ENCODE measurements at regions of chr1 and their contacts with region 1.

Region 1: GRCh38 chr1:109969907-109970306 is 14.7 kb upstream of the AHCYL1 start:
- DNase-seq: no peak
- ATAC-seq: peak; percentile 81
- H3K4me3 ChIP-seq: no peak overlapping the region
- H3K27ac ChIP-seq: peak overlapping the region; percentile 14
- H3K4me1 ChIP-seq: peaks cover 18% of the 10 kb centered on the region
- H3K27me3 ChIP-seq: no peaks in the 10 kb centered on the region
- CTCF ChIP-seq: no peak

Region 2: DNA sequence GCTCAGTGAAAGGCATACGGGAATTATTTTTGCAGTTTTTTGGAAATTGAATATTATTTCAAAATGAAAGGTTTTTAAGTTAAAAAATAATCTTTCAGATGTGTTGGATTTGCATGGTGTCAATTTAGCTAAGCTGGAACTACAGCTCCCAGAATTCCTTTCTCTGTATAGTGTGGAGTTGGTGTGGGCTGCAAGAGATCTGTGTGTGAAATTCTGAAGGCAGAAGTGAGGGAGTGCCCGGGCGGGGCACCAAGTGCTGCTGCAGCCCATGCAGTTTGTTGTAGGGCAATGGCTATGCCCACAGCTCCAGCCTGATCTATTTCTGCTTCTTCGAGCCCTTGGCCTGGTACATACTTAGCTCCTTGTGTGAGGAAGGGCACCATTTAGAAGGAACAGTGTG is 119.7 kb before region 1 on chr1:
- CTCF ChIA-PET with region 1: no interaction called
- POLR2A ChIA-PET with region 1: no interaction called
- intact Hi-C with region 1: no loop called
- DNase-seq: peak; percentile 21
- ATAC-seq: peak; percentile 65
- H3K4me3 ChIP-seq: no peak overlapping the region
- H3K27ac ChIP-seq: peak overlapping the region; percentile 33
- H3K4me1 ChIP-seq: peaks cover 21% of the 10 kb centered on the region
- H3K27me3 ChIP-seq: no peaks in the 10 kb centered on the region
- CTCF ChIP-seq: no peak

Region 3: DNA sequence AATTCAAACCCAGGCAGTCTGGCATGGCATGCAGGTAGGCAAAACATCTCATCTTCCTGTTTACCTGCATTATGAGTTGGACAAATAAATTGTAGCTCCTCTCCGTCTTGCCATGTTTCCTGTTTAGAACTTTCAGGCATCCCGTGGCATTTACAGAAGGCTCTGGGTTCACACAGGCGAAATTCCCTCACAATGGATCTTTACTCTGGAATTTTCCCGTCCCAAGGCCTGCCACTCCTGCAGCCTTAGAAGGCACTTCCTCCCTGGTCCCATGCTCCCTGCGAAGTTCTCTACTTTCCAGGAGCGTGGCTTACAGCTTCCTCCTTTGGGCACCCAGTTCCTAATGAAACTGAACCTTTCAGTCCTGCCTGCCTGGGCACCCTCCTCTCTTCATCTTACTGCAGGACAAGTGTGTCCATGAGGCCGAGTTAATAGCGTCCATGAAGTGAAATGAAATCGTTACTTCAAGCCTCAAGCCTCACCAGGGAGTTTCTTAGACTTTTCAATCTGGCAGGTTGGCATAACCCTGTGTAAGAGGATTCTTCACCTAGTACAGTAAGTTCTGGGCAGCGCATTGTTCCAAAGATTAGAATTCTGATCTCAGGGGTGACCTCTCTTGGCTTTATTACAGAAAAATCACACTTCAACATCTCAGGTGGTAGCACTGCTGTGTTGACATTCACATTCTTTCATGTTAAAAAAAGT is 22.2 kb before region 1 on chr1:
- CTCF ChIA-PET with region 1: no interaction called
- POLR2A ChIA-PET with region 1: no interaction called
- intact Hi-C with region 1: loop called (anchors 1 kb)
- DNase-seq: no peak
- ATAC-seq: peak; percentile 48
- H3K4me3 ChIP-seq: no peak overlapping the region
- H3K27ac ChIP-seq: no peak overlapping the region
- H3K4me1 ChIP-seq: 0 out of 2 replicates have a peak, but pooled peaks cover 6% of the 10 kb centered on the region
- H3K27me3 ChIP-seq: no peaks in the 10 kb centered on the region
- CTCF ChIP-seq: no peak

Region 4: DNA sequence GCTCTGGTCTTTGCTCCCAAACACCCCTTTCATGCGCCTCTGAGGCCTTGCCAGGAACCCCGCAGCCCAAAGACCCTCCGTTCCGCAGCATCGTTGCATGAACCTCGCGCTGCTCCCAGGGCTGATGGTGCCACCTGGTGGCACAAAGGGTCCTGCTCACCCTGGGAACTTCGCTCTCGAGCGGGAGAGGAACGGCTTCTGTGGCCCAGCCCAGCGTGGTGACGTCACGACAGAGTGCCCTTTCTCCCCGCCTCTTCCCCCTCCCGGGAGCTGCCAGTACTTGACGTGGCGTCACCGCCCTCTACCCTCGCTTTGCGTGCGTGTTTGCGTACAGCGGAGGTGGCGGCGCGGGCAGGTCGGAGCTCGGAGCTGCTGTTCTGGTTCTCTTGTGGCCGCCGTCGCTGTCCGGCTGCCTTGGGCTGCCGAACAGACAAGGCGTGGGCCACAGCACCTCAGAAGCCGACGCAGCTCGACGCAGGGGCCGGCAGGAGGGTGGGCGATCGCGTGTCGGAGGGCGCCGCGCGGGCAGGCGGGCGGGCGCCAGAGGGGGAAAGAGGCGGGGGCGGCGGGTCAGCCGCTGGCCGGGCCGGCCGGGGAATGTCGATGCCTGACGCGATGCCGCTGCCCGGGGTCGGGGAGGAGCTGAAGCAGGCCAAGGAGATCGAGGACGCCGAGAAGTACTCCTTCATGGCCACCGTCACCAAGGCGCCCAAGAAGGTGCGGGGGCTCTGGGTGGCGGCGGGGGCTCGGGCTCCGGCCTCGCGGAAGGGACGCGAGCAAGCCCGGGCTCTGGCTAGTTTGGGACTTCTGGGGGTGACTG is 14.8 kb after region 1 on chr1 and contains the start of gene AHCYL1:
- CTCF ChIA-PET with region 1: no interaction called
- POLR2A ChIA-PET with region 1: no interaction called
- intact Hi-C with region 1: no loop called
- DNase-seq: peak; percentile 99
- ATAC-seq: peak; percentile 86
- H3K4me3 ChIP-seq: peak within 1 kb of the TSS; percentile 84
- H3K27ac ChIP-seq: peak within 1 kb of the TSS; percentile 43
- H3K4me1 ChIP-seq: peaks cover 58% of the 10 kb centered on the region
- H3K27me3 ChIP-seq: no peaks in the 10 kb centered on the region
- CTCF ChIP-seq: peak; percentile 94
- total RNA-seq, gene AHCYL1: 35.8 and 40.9 TPM in 2 replicates